Heart left ventricle (tissue), 16 donors: ENCODE measurements at regions of chr1 and their contacts with region 1.

Region 1: GRCh38 chr1:3564921-3565827 is 46.1 kb downstream of the MEGF6 start:
- DNase-seq: no peak
- ATAC-seq: peak in 3 of 4 donors; percentile 21 to 56 (median 47)
- H3K4me3 ChIP-seq: no peak overlapping the region
- H3K27ac ChIP-seq: no peak overlapping the region
- H3K4me1 ChIP-seq: peaks cover 0 to 2% (median 0%) of the 10 kb centered on the region in 12 donors
- H3K27me3 ChIP-seq: peaks cover 0 to 13% (median 0%) of the 10 kb centered on the region in 9 donors
- CTCF ChIP-seq: peak; percentile 74 to 94 (median 86)
- POLR2A ChIP-seq: no peak

Region 2: GRCh38 chr1:3491291-3492246 is 73.6 kb before region 1 on chr1:
- intact Hi-C with region 1: loop called in 6 of 10 experiments (anchors 5 to 10 kb)
- DNase-seq: peak; percentile 71 to 90 (median 76)
- ATAC-seq: peak; percentile 60 to 87 (median 82)
- H3K4me3 ChIP-seq: peak overlapping the region in 1 of 12 donors; percentile 22
- H3K27ac ChIP-seq: no peak overlapping the region
- H3K4me1 ChIP-seq: peaks cover 0 to 8% (median 0%) of the 10 kb centered on the region in 12 donors
- H3K27me3 ChIP-seq: peaks cover 0 to under 1% (median 0%) of the 10 kb centered on the region in 9 donors
- CTCF ChIP-seq: peak; percentile 99 to 100 (median 100)
- POLR2A ChIP-seq: no peak

Region 3: DNA sequence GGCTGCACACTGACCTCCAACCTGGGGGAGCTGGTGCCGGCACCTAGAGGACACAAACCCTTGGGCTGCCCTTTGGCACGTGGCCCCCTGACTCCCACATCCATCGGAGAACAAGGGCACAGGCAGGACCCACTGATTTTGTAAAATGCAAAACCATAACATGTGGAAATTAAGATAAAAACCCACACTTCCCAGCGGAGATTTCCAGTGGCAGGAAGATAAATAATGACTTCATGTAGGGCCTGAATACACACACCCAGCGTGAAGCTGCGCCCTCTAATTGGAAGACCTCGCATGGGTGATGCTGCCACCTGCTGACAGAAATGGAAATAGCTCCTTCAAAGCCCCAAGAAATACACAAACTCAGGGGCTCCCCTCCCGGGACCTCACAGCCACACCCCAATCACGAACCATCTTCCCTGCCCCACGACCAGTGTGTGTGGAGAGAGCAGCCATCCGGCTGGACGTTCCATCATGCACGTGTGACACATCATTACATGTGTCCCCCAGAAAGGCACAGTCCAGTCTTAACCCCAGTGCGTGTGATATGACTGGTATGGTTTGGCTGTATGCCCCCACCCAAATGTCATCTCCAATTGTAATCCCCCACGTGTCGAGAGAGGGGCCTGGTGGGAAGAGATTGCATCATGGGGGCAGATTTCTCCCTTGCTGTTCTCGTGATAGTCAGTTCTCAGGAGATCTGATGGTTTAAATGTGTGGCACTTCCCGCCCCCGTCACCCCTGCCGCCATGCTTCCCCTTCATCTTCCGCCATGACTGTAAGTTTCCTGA is 53.9 kb after region 1 on chr1:
- intact Hi-C with region 1: loop called in 9 of 10 experiments (anchors 1 to 2 kb)
- DNase-seq: peak in 4 of 5 donors; percentile 65 to 74 (median 67)
- ATAC-seq: peak in 3 of 4 donors; percentile 75 to 81 (median 75)
- H3K4me3 ChIP-seq: no peak overlapping the region
- H3K27ac ChIP-seq: no peak overlapping the region
- H3K4me1 ChIP-seq: peaks cover 0 to 30% (median 20%) of the 10 kb centered on the region in 12 donors
- H3K27me3 ChIP-seq: peaks cover 0 to 3% (median 0%) of the 10 kb centered on the region in 9 donors
- CTCF ChIP-seq: peak; percentile 78 to 91 (median 84)
- POLR2A ChIP-seq: no peak

Region 4: DNA sequence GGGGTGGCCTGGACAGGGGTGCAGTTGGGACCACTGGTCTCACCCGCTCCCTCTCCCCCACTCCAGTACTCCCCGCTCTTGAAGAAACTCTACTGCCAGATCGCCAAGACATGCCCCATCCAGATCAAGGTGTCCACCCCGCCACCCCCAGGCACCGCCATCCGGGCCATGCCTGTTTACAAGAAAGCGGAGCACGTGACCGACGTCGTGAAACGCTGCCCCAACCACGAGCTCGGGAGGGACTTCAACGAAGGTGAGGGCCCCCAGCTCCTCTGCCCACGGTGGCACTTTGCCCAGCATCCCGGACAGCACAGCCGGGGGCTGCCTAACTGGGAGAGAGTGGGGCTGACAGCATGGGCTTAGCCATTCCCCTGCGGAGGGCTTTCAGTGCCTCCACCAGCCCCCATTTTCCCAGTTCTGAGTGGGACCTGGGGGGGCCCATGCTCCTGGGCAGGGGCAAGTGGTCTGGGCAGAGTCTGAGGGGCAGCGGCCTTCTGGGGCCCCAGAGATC is 156.8 kb after region 1 on chr1:
- intact Hi-C with region 1: loop called in 6 of 10 experiments (anchors 5 to 10 kb)
- DNase-seq: no peak
- ATAC-seq: no peak
- H3K4me3 ChIP-seq: no peak overlapping the region
- H3K27ac ChIP-seq: no peak overlapping the region
- H3K4me1 ChIP-seq: peaks cover 0 to 31% (median 3%) of the 10 kb centered on the region in 12 donors
- H3K27me3 ChIP-seq: peaks cover 0 to 16% (median 0%) of the 10 kb centered on the region in 9 donors
- CTCF ChIP-seq: no peak
- POLR2A ChIP-seq: no peak